Activated CD4-positive, alpha-beta T cell treated with anti-CD3 and anti-CD28 coated beads, Interleukin-2, amount 10 ng/mL, durations not matched to agents 24 days and 14 days (primary cell): ENCODE measurements at regions of chr12 and their contacts with region 1.

Region 1: GRCh38 chr12:29148911-29149690 is at the start of gene FAR2:
- DNase-seq: peak; percentile 85
- H3K4me3 Mint-ChIP-seq: peak within 1 kb of the TSS; percentile 95
- H3K27ac Mint-ChIP-seq: peak within 1 kb of the TSS; percentile 93
- H3K4me1 Mint-ChIP-seq: peaks cover 17% of the 10 kb centered on the region
- H3K27me3 Mint-ChIP-seq: peaks cover 56% of the 10 kb centered on the region
- total RNA-seq, gene FAR2: 4.4 and 5.2 TPM in 2 replicates

Region 2: DNA sequence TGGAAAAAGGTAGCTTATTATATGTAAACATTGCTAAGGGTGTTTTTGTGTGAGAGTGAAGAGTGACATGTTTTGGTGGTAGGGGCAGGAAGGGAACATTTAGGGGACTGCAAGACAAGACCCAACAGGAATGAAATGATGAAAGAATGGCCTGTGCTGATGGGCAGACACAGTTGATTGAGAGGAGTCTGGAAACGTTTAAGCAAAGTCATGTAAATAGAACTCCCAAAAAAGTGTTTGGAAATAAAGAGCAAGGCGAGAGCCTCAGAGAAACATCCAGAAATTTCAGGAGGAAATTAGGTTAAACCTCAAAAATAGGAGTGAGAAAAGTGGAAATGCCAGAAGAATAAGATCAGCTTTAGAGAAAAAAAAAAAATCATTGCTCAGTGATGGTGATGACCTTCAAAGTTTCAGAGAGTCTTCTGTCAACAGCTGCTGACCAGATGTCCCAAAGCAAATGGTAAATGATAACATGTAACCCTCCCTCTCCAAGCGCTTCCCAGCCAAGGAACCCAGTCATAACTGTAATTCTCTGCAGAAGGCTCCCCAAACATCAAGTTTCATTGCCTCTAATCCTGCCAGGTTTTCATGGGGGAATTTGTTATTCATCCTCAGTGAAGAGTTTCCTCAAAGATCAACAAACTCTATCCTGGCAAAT is 223.3 kb before region 1 on chr12:
- intact Hi-C with region 1: no loop called
- DNase-seq: no peak
- H3K4me3 Mint-ChIP-seq: no peak overlapping the region
- H3K27ac Mint-ChIP-seq: no peak overlapping the region
- H3K4me1 Mint-ChIP-seq: no peaks in the 10 kb centered on the region
- H3K27me3 Mint-ChIP-seq: no peaks in the 10 kb centered on the region

Region 3: DNA sequence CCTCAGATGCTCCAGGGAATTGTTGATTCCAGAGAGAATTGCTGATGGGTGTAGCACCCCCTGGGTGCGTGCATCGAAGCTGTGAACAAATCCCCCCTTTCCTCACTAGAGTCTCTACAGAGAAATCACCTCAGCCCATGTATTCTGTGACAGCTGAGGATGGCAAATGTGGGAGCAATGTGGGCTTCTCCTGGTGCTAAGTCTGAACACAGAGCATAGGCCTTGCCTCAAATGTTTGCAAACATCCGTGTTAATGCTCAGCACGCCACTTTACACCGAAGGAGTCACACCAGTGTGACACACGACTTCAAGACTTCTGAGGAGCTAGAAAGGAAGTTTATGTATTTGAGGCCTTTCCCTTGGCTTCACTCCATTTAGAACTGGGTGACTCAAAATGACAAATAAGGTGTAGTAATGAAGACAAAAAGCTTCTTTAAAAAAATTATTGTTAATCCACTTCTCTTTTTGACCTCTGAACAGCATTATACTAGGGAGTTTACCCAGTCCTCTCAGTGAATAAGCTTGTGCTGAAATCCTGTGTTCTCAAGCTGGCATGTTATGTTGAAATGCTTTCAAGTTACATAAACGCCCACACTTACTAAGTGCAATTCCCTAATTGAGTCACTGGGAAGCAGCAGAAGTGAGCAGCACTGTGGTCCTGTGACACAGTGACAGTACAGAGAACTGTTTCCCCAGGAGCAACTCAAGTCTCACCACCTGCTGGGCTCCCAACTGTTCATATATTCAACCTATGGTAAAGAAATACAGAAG is 92.9 kb after region 1 on chr12:
- intact Hi-C with region 1: loop called (anchors 5 kb)
- DNase-seq: no peak
- H3K4me3 Mint-ChIP-seq: no peak overlapping the region
- H3K27ac Mint-ChIP-seq: peak overlapping the region; percentile 14
- H3K4me1 Mint-ChIP-seq: peaks cover 13% of the 10 kb centered on the region
- H3K27me3 Mint-ChIP-seq: peaks cover 3% of the 10 kb centered on the region